ENCODE measurements at regions of chr3 and their contacts with region 1.

Region 1: GRCh38 chr3:139302084-139302800 is 41.6 kb upstream of the MRPS22 start:
- DNase-seq: peak; percentile 33
- H3K4me3 ChIP-seq: no peak overlapping the region
- H3K27ac ChIP-seq: peak overlapping the region; percentile 65 to 87; a peak in 3 of 4 replicates
- H3K4me1 ChIP-seq: peaks cover 5 to 31% of the 10 kb centered on the region in 2 experiments; a peak in 3 of 4 replicates
- H3K27me3 ChIP-seq: no peaks in the 10 kb centered on the region
- CTCF ChIP-seq: no peak
- EP300 ChIP-seq: peak in 1 of 2 experiments; percentile 97; a peak in 2 of 4 replicates
- RAD21 ChIP-seq: no peak

Region 2: DNA sequence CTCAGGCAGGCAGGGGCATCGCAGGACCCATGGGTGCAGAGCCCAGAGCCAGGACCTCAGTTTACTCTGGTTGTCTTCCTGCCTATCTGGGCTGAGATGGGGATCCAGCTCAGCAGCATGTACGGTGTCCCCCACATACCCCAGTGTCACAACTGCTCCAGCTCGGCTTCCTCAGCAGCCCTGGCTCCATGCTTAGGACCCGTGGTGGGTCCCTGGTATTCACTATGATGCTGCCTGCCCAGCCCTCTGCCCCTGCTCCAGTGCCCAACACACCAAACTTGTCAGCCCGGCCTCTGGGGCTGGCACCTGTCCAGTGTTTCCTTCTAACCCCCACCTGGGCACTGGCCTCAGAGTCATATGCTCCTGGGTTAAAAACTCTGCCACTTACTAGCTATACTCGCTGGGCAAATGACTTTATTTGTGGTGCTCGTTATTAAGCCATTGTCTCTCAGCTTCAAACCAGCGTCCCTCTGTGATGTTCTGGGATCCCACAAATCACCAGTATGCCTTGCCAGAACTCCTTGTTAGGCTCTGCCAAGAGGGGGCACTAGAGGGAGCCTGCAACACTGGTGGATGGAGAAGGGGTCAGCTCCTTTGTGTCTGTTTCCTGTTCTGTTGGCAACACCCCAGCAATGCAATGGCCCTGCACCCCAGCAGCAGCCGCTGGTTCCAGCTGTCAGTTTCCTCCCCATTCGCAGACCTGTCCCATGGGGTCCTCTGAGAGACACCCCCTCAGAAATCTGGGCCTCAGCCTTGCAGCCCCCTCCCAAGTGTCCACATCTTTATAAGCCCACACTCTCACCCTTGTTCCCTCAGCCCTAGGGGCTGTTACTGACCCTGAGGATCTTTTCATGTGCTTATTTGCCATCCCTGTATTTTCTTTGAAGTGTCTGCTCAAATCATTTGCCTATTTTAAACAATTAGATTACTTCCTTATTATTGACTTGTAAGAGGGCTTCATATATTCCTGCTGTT is 17.5 kb after region 1 on chr3:
- CTCF ChIA-PET with region 1: interaction called, 17 read pairs
- POLR2A ChIA-PET with region 1: interaction called, 3 read pairs
- DNase-seq: peak; percentile 51
- H3K4me3 ChIP-seq: no peak overlapping the region
- H3K27ac ChIP-seq: no peak overlapping the region
- H3K4me1 ChIP-seq: peaks cover 0 to 13% of the 10 kb centered on the region in 2 experiments; a peak in 1 of 4 replicates
- H3K27me3 ChIP-seq: no peaks in the 10 kb centered on the region
- CTCF ChIP-seq: peak; percentile 49
- EP300 ChIP-seq: no peak
- RAD21 ChIP-seq: no peak

Region 3: GRCh38 chr3:139329345-139329850 is 27.2 kb after region 1 on chr3:
- CTCF ChIA-PET with region 1: interaction called, 15 read pairs
- POLR2A ChIA-PET with region 1: no interaction called
- DNase-seq: peak; percentile 87
- H3K4me3 ChIP-seq: peak overlapping the region; percentile 24 to 55; a peak in 2 of 4 replicates
- H3K27ac ChIP-seq: no peak overlapping the region
- H3K4me1 ChIP-seq: peaks cover 0 to 5% of the 10 kb centered on the region in 2 experiments; a peak in 1 of 4 replicates
- H3K27me3 ChIP-seq: peaks cover 11% of the 10 kb centered on the region; the same call in 1 of the 2 replicates
- CTCF ChIP-seq: peak; percentile 99
- EP300 ChIP-seq: no peak
- RAD21 ChIP-seq: peak; percentile 98